Activated B cell treated with CpG ODN at 0.5 μM for 24 hours (primary cell): ENCODE measurements at regions of chr2 and their contacts with region 1.

Region 1: DNA sequence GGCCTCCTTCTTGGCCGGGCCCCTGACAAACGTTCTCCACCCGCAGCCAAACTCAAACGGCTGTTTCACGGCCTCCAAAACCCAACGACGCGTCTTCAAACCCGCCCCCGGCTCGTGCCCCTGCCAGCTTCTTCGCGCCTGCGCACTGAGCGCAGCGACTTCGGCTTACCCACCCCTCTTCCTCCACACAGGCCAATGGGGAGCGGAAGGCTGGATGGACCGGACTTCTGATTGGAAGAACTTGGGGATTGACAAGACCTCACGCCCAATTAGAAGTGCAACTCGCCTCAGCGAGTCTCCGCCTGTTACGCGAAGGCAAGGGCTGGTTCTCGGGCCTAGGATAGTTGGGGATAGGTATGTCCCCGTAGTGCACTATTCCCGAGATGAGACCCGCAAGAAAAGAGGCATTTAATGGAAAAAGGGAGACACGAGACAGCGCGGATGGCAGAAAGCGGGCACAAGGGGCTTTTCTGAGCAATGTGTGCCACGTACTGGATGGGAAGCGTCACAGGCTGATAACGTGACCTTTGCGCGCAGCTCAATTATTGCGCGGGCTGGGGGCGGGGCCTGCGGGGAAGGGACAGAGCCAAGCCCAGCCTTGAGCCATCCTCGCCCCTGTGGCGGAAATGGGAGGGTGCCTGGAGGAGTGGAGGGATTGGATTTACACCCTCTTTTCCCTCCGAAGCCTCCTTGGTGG is at the start of gene LAPTM4A:
- DNase-seq: peak; percentile 91
- ATAC-seq: peak; percentile 90
- H3K4me3 Mint-ChIP-seq: no peak within 1 kb of the TSS
- H3K27ac Mint-ChIP-seq: no peak within 1 kb of the TSS
- H3K4me1 Mint-ChIP-seq: peaks cover 29% of the 10 kb centered on the region
- H3K27me3 Mint-ChIP-seq: peaks cover 14% of the 10 kb centered on the region
- CTCF ChIP-seq: no peak
- total RNA-seq, gene LAPTM4A: 47.2 and 48.8 TPM in 2 replicates

Region 2: GRCh38 chr2:19347619-19348562 is 703.8 kb before region 1 on chr2:
- CTCF ChIA-PET with region 1: no interaction called
- POLR2A ChIA-PET with region 1: no interaction called
- intact Hi-C with region 1: loop called (anchors 1 kb)
- DNase-seq: peak; percentile 100
- ATAC-seq: peak; percentile 89
- H3K4me3 Mint-ChIP-seq: peak overlapping the region; percentile 98
- H3K27ac Mint-ChIP-seq: peak overlapping the region; percentile 98
- H3K4me1 Mint-ChIP-seq: peaks cover 35% of the 10 kb centered on the region
- H3K27me3 Mint-ChIP-seq: peaks cover 28% of the 10 kb centered on the region
- CTCF ChIP-seq: no peak

Region 3: DNA sequence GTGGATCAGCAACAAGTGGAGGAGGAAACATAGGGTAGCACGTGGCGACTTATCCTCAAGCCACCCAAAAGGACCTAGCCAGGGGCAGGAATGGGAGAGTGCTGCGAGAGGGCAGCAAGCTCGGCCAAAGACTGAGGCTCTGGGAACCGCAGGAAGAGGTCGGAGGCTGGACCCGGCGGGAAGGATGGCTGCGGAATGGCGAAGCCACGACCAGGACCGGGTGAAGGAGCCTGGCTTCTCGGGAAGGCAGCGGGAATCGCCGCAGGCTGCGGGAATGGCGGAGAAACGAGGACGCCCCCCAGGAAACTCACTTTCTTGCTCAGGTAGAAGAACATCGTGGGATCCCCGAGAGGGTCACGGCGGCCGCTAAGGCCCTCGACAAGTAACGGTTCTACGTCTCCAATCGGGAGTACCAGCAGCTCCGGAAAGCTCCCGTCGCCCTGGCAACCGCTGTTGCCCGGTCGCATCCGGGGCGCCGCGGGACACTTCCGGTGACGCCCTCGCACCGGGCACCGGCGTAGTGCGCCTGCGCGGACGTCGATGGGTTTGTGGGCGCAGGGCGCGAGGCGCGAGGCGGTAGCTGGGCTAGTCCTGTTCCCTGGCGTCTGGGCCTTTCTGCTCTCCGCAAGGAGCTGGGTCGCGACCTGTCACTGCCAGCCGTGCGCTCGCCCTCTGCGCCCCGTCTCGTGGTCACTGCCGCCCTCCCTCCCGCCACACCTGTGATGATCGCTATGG is 61.8 kb before region 1 on chr2 and contains the start of gene WDR35:
- CTCF ChIA-PET with region 1: no interaction called
- POLR2A ChIA-PET with region 1: interaction called, 20 read pairs
- intact Hi-C with region 1: loop called (anchors 1 kb)
- DNase-seq: peak; percentile 93
- ATAC-seq: peak; percentile 89
- H3K4me3 Mint-ChIP-seq: peak within 1 kb of the TSS; percentile 91
- H3K27ac Mint-ChIP-seq: peak within 1 kb of the TSS; percentile 85
- H3K4me1 Mint-ChIP-seq: peaks cover 31% of the 10 kb centered on the region
- H3K27me3 Mint-ChIP-seq: peaks cover 18% of the 10 kb centered on the region
- CTCF ChIP-seq: no peak
- total RNA-seq, gene WDR35: 8.1 and 8.2 TPM in 2 replicates

Region 4: DNA sequence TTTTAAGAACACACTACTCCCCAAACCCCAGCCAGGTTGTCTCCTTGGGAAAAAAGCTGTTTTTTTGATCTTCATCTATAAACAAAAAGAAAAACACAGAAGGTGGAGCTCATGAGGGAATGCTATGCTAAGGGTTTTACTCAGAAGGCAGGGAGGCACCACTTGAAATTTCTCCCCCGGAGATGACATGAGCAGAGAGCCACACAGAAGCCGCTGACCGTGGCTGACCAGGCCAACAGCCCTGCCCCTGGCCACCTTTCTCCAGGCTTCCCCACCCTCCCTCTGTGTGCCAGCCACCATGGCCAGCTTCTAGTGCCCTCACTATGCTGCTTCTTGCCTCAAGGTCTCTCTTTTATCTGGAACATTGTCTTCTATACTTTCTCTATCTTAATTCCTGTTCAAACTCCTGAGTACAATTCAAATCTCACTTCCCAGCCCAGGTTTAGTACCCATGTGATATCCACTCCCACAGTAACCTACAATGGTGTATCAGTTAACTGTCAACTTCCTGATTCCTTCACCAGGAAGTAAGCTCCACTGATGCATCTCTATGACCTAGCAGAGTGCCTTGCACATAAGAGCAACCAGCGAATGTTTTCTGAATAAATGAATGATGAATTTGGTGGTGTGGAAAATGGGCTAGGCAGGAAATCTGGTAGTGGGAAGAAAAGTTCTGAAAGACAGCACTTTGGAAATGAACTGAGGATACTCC is 15.6 kb before region 1 on chr2:
- CTCF ChIA-PET with region 1: interaction called, 3 read pairs
- POLR2A ChIA-PET with region 1: interaction called, 8 read pairs
- intact Hi-C with region 1: loop called (anchors 1 kb)
- DNase-seq: no peak
- ATAC-seq: peak; percentile 90
- H3K4me3 Mint-ChIP-seq: peak overlapping the region; percentile 21
- H3K27ac Mint-ChIP-seq: peak overlapping the region; percentile 79
- H3K4me1 Mint-ChIP-seq: peaks cover 33% of the 10 kb centered on the region
- H3K27me3 Mint-ChIP-seq: no peaks in the 10 kb centered on the region
- CTCF ChIP-seq: no peak

Region 5: DNA sequence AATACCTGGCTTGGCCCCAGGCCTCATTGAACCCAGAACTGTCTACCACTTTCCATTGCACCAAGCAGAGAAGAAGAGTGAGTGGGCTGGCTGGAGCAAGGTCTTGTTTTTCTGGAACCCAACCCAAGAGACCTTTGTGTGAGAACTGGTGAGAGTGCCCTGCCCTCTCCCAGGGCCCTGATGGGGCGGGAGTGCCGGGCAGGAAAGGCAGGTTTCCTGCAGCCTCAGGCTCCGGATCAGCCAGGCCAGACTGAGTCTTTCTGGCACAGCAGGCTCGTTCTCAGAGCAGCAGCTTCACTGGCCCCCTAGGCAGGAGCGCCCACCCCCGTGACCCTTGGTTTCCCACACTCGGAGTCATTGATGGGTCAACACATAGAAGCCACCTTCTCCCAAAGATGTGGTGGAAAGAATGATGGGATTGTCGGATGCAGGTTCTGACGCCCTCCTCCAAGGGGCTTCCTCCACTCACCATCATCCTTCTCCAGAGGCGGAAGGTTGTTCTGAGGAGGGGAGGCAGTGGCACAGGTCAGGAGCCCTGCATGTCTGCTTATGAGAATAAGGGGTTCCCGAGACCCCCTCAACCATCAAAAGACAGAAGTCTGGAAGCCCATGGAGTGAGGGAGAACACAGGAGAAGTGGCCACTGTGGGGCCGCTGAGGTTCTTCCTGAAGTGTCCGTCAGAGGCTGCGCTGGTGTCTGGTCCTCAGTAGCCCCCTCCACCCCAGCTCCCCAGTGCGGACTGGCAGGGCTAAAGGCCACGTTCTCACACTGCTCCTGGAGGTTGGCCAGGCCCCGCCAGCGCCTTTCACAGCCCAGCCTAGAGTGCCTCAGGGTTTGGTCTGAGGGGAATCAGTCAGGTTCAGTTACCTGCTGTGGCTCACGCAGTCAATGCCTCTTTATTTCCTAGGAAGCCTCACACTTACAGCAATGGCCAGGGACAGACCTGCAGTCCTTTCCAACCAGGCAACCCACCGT is 62.6 kb after region 1 on chr2:
- CTCF ChIA-PET with region 1: no interaction called
- POLR2A ChIA-PET with region 1: no interaction called
- intact Hi-C with region 1: no loop called
- DNase-seq: no peak
- ATAC-seq: no peak
- H3K4me3 Mint-ChIP-seq: no peak overlapping the region
- H3K27ac Mint-ChIP-seq: no peak overlapping the region
- H3K4me1 Mint-ChIP-seq: no peaks in the 10 kb centered on the region
- H3K27me3 Mint-ChIP-seq: peaks cover 9% of the 10 kb centered on the region
- CTCF ChIP-seq: no peak

Region 6: GRCh38 chr2:20333738-20334137 is 282.1 kb after region 1 on chr2:
- CTCF ChIA-PET with region 1: no interaction called
- POLR2A ChIA-PET with region 1: no interaction called
- intact Hi-C with region 1: loop called (anchors 5 kb)
- DNase-seq: no peak
- ATAC-seq: peak; percentile 74
- H3K4me3 Mint-ChIP-seq: peak overlapping the region; percentile 66
- H3K27ac Mint-ChIP-seq: peak overlapping the region; percentile 86
- H3K4me1 Mint-ChIP-seq: peaks cover 92% of the 10 kb centered on the region
- H3K27me3 Mint-ChIP-seq: no peaks in the 10 kb centered on the region
- CTCF ChIP-seq: no peak

Region 7: GRCh38 chr2:20650880-20651730 is 599.4 kb after region 1 on chr2 and contains the start of gene HS1BP3:
- CTCF ChIA-PET with region 1: no interaction called
- POLR2A ChIA-PET with region 1: no interaction called
- intact Hi-C with region 1: loop called (anchors 2 kb)
- DNase-seq: peak; percentile 97
- ATAC-seq: peak; percentile 95
- H3K4me3 Mint-ChIP-seq: peak within 1 kb of the TSS; percentile 87
- H3K27ac Mint-ChIP-seq: peak within 1 kb of the TSS; percentile 94
- H3K4me1 Mint-ChIP-seq: peaks cover 41% of the 10 kb centered on the region
- H3K27me3 Mint-ChIP-seq: peaks cover 3% of the 10 kb centered on the region
- CTCF ChIP-seq: no peak
- total RNA-seq, gene HS1BP3: 13.0 and 13.1 TPM in 2 replicates